ENCODE measurements at regions of chr9 and their contacts with region 1.

Region 1: GRCh38 chr9:20209391-20210340 is 412.6 kb downstream of the MLLT3 start:
- DNase-seq: peak; percentile 94
- ATAC-seq: peak; percentile 89
- H3K4me3 Mint-ChIP-seq: peak overlapping the region; percentile 30
- H3K27ac Mint-ChIP-seq: peak overlapping the region; percentile 90
- H3K4me1 Mint-ChIP-seq: peaks cover 59% of the 10 kb centered on the region
- H3K27me3 Mint-ChIP-seq: no peaks in the 10 kb centered on the region

Region 2: GRCh38 chr9:20242510-20243189 is 33.0 kb after region 1 on chr9:
- CTCF ChIA-PET with region 1: interaction called, 11 read pairs
- POLR2A ChIA-PET with region 1: interaction called, 10 read pairs
- DNase-seq: peak; percentile 86
- ATAC-seq: peak; percentile 90
- H3K4me3 Mint-ChIP-seq: peak overlapping the region; percentile 52
- H3K27ac Mint-ChIP-seq: peak overlapping the region; percentile 90
- H3K4me1 Mint-ChIP-seq: peaks cover 88% of the 10 kb centered on the region
- H3K27me3 Mint-ChIP-seq: peaks cover 5% of the 10 kb centered on the region

Measured in activated CD8-positive, alpha-beta T cell treated with anti-CD3 and anti-CD28 coated beads, Interleukin-2, amount 10 ng/mL, durations not matched to agents 7 days and 5 days (primary cell).